SK-N-SH (cell line): ENCODE measurements at regions of chr17 and their contacts with region 1.

Region 1: GRCh38 chr17:82030470-82031302 is 792 bp upstream of the RAC3 start:
- DNase-seq: peak; percentile 96
- H3K4me3 ChIP-seq: peak overlapping the region; percentile 50 to 62
- H3K27ac ChIP-seq: peak overlapping the region in 1 of 2 experiments; percentile 85; a peak in 2 of 4 replicates
- H3K4me1 ChIP-seq: peaks cover 0 to 18% of the 10 kb centered on the region in 2 experiments; a peak in 2 of 4 replicates
- H3K27me3 ChIP-seq: no peaks in the 10 kb centered on the region
- CTCF ChIP-seq: peak; percentile 69
- EP300 ChIP-seq: no peak
- RAD21 ChIP-seq: peak; percentile 96

Region 2: DNA sequence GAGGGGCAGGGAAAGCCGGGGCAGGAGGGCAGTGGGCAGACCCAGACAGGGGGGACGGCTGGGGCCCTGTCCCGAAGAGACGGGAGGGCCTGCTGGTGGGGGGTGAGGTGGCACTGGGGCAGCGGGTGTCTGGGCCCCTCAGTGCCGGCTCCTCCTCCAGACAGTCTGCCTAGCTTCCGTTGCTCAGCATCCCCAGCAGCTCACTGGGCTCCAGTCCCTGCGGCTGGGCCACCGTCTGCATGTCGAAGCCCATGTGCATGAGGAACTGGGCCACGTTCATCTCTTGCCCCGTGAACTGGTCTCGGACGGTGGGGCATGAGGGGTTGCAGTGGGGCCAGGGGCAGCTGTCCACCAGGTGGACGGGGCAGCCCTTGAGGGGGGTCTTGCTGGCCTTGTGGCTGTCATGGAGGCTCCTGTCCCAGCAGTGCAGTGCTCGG is 77.9 kb before region 1 on chr17:
- CTCF ChIA-PET with region 1: interaction called, 11 read pairs
- POLR2A ChIA-PET with region 1: no interaction called
- DNase-seq: no peak
- H3K4me3 ChIP-seq: no peak overlapping the region
- H3K27ac ChIP-seq: no peak overlapping the region
- H3K4me1 ChIP-seq: peaks cover 0 to 14% of the 10 kb centered on the region in 2 experiments; a peak in 1 of 4 replicates
- H3K27me3 ChIP-seq: no peaks in the 10 kb centered on the region
- CTCF ChIP-seq: no peak
- EP300 ChIP-seq: no peak
- RAD21 ChIP-seq: no peak

Region 3: DNA sequence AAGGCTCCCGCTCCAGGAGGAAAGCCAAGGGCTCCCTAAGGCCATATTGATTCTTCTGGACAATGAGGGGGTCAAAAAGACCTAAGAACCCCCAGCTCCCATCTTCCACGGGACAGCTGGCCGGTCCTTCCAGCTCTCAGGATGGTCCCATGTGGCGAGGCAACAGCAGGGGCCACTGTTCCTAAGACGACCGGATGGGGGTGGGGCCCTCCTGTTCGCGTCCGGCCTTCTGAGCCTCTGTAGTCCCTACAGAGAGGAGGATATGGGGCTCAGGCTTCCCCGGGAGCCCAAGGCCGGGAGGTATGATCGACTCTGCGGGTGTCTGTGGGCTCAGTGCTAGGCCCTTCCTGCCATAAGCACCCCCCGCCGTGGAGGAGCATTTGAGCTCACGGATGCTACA is 12.8 kb after region 1 on chr17:
- CTCF ChIA-PET with region 1: interaction called, 92 read pairs
- POLR2A ChIA-PET with region 1: no interaction called
- DNase-seq: no peak
- H3K4me3 ChIP-seq: no peak overlapping the region
- H3K27ac ChIP-seq: no peak overlapping the region
- H3K4me1 ChIP-seq: peaks cover 0 to 5% of the 10 kb centered on the region in 2 experiments; a peak in 1 of 4 replicates
- H3K27me3 ChIP-seq: no peaks in the 10 kb centered on the region
- CTCF ChIP-seq: no peak
- EP300 ChIP-seq: no peak
- RAD21 ChIP-seq: no peak

Region 4: DNA sequence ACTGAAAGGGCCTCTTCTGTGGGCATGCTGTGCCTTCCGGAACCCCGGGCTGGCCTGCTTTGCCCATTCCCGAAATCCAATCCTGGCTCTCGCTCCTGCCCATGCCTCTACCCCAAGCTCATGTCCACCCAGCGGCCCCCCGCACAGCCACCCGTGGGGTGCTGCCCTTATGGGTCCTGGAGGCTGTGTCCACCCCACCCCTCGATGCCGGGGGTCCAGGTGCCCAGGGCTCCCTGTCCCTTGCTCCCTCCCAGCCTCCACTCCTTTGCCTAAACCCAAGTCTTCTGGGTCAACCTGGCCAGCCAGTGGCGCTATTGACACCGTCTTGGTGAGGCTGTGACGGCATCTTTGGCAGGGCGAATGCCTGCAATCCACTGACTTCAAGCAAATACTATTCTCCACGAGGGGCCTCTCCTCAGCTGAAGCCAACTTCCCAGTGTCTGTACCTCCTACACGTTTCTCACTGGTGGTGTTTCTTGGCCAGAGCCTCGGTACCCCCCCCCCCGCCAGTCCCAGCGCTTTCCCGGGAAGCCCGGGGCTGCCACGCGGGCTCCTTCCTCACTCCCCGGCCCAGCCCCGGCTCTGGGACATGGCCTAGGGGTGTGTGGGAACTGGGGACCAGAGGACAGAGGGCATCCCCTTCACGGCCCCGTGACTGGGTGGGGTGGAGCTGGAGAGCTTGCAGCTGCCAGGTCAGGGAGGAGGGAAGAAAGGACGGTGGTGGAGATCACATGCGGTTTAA is 47.1 kb after region 1 on chr17:
- CTCF ChIA-PET with region 1: interaction called, 14 read pairs
- POLR2A ChIA-PET with region 1: no interaction called
- DNase-seq: no peak
- H3K4me3 ChIP-seq: no peak overlapping the region
- H3K27ac ChIP-seq: no peak overlapping the region
- H3K4me1 ChIP-seq: no peaks in the 10 kb centered on the region
- H3K27me3 ChIP-seq: no peaks in the 10 kb centered on the region
- CTCF ChIP-seq: no peak
- EP300 ChIP-seq: no peak
- RAD21 ChIP-seq: no peak

Region 5: DNA sequence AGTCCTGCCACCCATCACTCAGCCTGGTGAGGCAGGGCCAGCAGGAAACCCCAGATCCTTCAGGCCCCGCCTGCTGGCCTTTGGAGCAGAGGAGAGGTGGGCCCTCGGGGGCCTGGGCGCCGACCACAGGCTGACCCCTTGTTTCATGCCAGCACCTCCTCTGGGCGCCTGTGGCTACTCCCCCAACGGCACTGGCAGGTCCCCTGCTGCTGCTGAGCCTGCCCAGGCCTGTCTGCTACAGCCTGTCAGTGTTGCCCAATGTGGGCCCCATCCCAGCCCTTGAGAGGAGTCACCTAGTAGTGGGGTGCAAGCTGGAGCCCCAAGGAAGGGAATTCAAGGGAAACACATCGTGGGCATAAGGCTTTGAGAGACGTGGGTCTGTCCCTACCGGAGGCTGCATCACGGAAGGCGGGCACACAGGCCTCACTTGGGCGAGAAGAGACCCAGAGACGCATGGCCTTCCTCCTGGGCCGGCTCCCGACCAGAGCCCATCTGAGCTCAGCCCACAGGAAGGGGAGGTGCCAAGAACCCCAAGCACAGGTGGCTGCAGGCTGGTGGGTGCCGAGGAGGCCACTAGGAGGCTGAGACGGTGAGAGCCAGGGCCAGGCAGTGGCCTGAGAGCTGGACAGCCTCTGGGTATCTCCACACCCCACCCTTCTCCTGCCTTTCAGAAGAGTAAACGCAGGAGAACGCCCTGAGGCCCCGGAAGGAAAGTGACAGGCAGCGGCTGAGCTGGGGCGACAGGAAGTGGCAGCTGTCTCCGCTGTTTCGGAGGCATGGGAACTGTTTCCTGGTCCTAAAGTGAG is 75.4 kb after region 1 on chr17:
- CTCF ChIA-PET with region 1: interaction called, 45 read pairs
- POLR2A ChIA-PET with region 1: no interaction called
- DNase-seq: peak; percentile 97
- H3K4me3 ChIP-seq: peak overlapping the region in 1 of 2 experiments; percentile 9; a peak in 1 of 4 replicates
- H3K27ac ChIP-seq: peak overlapping the region; percentile 16 to 93; a peak in 3 of 4 replicates
- H3K4me1 ChIP-seq: peaks cover 11 to 63% of the 10 kb centered on the region in 2 experiments; a peak in 3 of 4 replicates
- H3K27me3 ChIP-seq: no peaks in the 10 kb centered on the region
- CTCF ChIP-seq: peak; percentile 49
- EP300 ChIP-seq: peak in 1 of 2 experiments; percentile 42; a peak in 1 of 4 replicates
- RAD21 ChIP-seq: peak; percentile 38

Region 6: DNA sequence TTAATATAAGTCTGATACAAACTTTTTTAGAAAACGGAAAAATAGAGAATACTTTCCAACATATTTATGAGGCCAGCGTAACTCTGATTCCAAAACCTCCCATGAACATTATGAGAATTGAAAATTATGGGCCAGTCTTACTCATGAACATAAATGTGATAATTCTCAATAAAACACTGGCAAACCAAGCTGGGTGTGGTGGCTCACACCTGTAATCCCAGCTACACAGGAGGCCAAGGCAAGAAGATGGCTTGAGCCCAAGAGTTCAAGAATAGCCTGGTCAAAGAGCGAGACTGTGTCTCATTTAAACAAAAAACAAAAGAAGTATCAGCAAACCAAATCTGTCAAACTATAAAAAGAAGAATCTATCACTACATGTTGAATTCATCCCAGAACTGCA is 134.2 kb after region 1 on chr17:
- CTCF ChIA-PET with region 1: interaction called, 10 read pairs
- POLR2A ChIA-PET with region 1: no interaction called
- DNase-seq: no peak
- H3K4me3 ChIP-seq: no peak overlapping the region
- H3K27ac ChIP-seq: no peak overlapping the region
- H3K4me1 ChIP-seq: no peaks in the 10 kb centered on the region
- H3K27me3 ChIP-seq: no peaks in the 10 kb centered on the region
- CTCF ChIP-seq: no peak
- EP300 ChIP-seq: no peak
- RAD21 ChIP-seq: no peak

Region 7: GRCh38 chr17:82236142-82236981 is 205.7 kb after region 1 on chr17:
- CTCF ChIA-PET with region 1: interaction called, 17 read pairs
- POLR2A ChIA-PET with region 1: interaction called, 3 read pairs
- DNase-seq: peak; percentile 97
- H3K4me3 ChIP-seq: no peak overlapping the region; a peak in 1 of 4 replicates
- H3K27ac ChIP-seq: peak overlapping the region in 1 of 2 experiments; percentile 6; a peak in 1 of 4 replicates
- H3K4me1 ChIP-seq: peaks cover 18 to 33% of the 10 kb centered on the region in 2 experiments; a peak in 3 of 4 replicates
- H3K27me3 ChIP-seq: no peaks in the 10 kb centered on the region
- CTCF ChIP-seq: peak; percentile 99
- EP300 ChIP-seq: no peak
- RAD21 ChIP-seq: peak; percentile 84